Posterior vena cava (tissue), 2 donors: ENCODE measurements at regions of chr22 and their contacts with region 1.

Region 1: GRCh38 chr22:34210301-34210700 is 290.0 kb upstream of the LARGE1 start:
- DNase-seq: no peak

Region 2: DNA sequence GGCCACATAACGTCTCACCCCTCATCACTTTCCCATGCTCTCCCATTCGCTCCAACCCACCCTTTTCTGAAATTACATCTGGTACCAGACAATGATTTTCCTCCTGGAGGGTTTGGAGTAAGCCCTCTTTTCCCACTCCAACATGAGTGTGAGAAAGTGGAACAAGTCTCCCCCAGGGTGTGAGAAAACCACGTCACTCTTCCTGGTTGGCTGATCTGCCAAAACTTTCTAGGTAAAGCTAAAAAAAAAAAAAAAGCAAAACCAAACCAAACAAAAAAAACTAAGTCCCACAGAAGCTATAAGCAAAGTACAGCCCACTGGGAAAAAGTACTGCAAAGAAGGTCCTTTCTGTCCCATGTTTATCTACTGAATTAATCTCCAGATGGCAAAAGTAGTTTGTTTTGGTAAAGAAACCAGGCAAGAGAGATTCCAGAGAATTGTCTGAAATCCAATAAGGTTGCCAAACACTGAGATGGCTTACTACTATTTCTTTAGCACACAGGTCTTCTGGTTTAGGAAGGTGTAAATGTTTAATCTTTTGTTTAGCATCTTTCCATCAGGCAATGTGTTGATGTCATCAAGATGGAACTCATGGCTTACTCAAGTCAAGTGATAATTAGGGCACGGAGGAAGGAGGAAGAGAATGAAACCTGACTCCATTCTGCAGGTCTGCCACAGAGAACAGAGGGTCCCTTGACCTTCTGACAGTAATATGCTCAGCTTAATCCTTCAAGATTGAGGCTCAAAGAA is 685.6 kb before region 1 on chr22:
- intact Hi-C with region 1: loop called in 1 of 2 experiments (anchors 5 kb)
- DNase-seq: no peak